Gastrocnemius medialis (tissue), 4 donors: ENCODE measurements at regions of chr5 and their contacts with region 1.

Region 1: GRCh38 chr5:175444060-175444904 is at the start of gene DRD1:
- DNase-seq: no peak
- ATAC-seq: peak in 1 of 2 donors; percentile 54
- H3K4me3 ChIP-seq: peak within 1 kb of the TSS; percentile 23 to 42 (median 34)
- H3K27ac ChIP-seq: no peak within 1 kb of the TSS
- H3K4me1 ChIP-seq: peaks cover 0 to 4% of the 10 kb centered on the region in 2 donors
- H3K27me3 ChIP-seq: peaks cover 36 to 44% (median 40%) of the 10 kb centered on the region in 3 donors
- CTCF ChIP-seq: peak in 4 of 5 experiments; percentile 32 to 60 (median 48)
- POLR2A ChIP-seq: no peak
- total RNA-seq, gene DRD1: not detected

Region 2: GRCh38 chr5:173781814-173782670 is 1662.2 kb before region 1 on chr5:
- in situ Hi-C with region 1: no loop called
- intact Hi-C with region 1: no loop called
- DNase-seq: peak; percentile 75 to 90
- ATAC-seq: peak; percentile 93 to 95
- H3K4me3 ChIP-seq: no peak overlapping the region
- H3K27ac ChIP-seq: peak overlapping the region; percentile 76 to 82 (median 80)
- H3K4me1 ChIP-seq: peaks cover 9 to 26% of the 10 kb centered on the region in 2 donors
- H3K27me3 ChIP-seq: no peaks in the 10 kb centered on the region
- CTCF ChIP-seq: no peak
- POLR2A ChIP-seq: peak; percentile 15 to 40

Region 3: DNA sequence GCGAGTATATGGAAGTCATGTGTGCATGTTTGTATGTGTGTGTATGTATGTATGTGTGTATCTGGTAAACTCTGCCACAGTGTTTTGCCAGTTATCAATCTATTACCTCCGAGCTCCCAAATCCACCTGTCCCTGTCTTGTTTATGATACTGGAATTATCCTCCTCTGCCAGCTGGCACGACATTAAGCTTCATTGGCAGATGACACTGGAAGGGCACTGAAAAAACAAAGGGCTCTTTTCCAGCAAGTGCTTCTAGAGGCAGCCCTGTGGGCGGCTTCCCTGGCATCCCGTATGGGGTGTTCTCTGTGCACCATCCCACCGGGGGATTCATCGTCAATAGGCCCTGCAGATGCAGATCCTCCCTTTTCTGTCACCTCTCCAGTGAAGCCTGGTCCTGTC is 498.4 kb before region 1 on chr5:
- in situ Hi-C with region 1: loop called (anchors 5 to 25 kb)
- intact Hi-C with region 1: loop called (anchors 1 kb)
- DNase-seq: no peak
- ATAC-seq: no peak
- H3K4me3 ChIP-seq: no peak overlapping the region
- H3K27ac ChIP-seq: no peak overlapping the region
- H3K4me1 ChIP-seq: no peaks in the 10 kb centered on the region
- H3K27me3 ChIP-seq: peaks cover 0 to 6% (median 0%) of the 10 kb centered on the region in 3 donors
- CTCF ChIP-seq: no peak
- POLR2A ChIP-seq: no peak

Region 4: DNA sequence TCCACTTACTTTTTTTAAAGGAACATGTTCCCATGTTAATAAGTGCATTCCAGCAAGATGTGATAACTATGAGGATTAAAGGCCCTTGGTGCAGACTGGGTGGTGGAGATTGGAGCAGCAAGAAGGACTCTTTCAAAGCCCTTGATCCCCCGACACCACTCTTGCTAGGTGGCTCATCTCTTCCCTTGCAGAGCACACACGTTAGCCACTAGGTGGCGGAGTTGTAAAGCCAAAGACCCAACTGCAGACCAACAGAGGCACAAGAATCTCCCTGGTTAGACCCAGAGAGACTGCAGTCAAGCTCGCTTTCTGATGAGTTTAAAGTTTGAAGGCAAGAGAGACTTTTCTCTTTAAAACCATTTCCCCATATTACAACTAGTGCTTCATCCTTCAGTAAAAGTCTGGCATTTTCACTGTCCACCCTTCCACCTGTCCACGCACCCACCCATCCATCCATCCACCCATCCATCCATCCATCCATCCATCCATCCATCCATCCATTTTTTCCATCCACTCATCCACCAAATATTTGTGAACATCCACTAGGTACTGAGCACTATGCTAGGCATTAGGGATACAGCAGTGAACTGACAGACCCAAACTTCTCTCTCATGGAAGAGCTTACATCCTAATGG is 493.0 kb before region 1 on chr5:
- in situ Hi-C with region 1: loop called (anchors 5 to 25 kb)
- intact Hi-C with region 1: loop called (anchors 1 kb)
- DNase-seq: peak in 1 of 2 donors; percentile 6
- ATAC-seq: peak; percentile 60 to 70
- H3K4me3 ChIP-seq: no peak overlapping the region
- H3K27ac ChIP-seq: no peak overlapping the region
- H3K4me1 ChIP-seq: no peaks in the 10 kb centered on the region
- H3K27me3 ChIP-seq: peaks cover 0 to 3% (median 0%) of the 10 kb centered on the region in 3 donors
- CTCF ChIP-seq: peak; percentile 28 to 72 (median 58)
- POLR2A ChIP-seq: no peak

Region 5: DNA sequence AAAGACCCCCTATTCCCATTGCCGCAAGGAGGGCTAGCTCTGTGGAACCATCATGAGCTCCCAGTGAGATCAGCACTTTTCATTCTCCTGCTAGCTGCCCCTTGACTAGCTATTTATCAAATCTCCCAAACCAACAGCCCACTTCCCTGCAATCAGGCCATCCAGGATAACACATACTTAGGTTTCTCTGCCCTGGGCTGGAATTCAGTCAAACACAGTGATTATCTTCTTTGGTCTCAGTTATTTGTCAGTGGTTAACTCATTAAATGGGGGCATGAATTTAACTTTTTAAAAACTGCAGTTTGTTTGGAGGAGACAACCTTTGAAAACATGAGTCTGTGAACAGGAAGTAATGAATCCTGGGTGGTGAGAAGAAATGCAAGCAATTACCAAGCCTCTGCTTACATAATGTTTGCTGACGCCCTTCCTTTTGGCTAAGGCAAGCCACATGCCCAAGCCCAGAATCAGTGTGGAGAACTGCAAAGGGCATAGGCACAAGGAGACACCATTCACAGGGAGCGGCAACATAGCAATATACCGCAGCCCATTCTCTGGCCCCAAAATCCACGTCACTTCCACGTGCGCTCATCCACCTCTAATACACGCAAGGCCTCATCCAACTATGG is 275.3 kb before region 1 on chr5:
- in situ Hi-C with region 1: no loop called
- intact Hi-C with region 1: no loop called
- DNase-seq: no peak
- ATAC-seq: no peak
- H3K4me3 ChIP-seq: no peak overlapping the region
- H3K27ac ChIP-seq: no peak overlapping the region
- H3K4me1 ChIP-seq: no peaks in the 10 kb centered on the region
- H3K27me3 ChIP-seq: no peaks in the 10 kb centered on the region
- CTCF ChIP-seq: no peak
- POLR2A ChIP-seq: no peak

Region 6: GRCh38 chr5:175556777-175557176 is 112.5 kb after region 1 on chr5:
- in situ Hi-C with region 1: no loop called
- intact Hi-C with region 1: no loop called
- DNase-seq: no peak
- ATAC-seq: no peak
- H3K4me3 ChIP-seq: no peak overlapping the region
- H3K27ac ChIP-seq: no peak overlapping the region
- H3K4me1 ChIP-seq: no peaks in the 10 kb centered on the region
- H3K27me3 ChIP-seq: peaks cover 0 to 4% (median 0%) of the 10 kb centered on the region in 3 donors
- CTCF ChIP-seq: no peak
- POLR2A ChIP-seq: no peak

Region 7: DNA sequence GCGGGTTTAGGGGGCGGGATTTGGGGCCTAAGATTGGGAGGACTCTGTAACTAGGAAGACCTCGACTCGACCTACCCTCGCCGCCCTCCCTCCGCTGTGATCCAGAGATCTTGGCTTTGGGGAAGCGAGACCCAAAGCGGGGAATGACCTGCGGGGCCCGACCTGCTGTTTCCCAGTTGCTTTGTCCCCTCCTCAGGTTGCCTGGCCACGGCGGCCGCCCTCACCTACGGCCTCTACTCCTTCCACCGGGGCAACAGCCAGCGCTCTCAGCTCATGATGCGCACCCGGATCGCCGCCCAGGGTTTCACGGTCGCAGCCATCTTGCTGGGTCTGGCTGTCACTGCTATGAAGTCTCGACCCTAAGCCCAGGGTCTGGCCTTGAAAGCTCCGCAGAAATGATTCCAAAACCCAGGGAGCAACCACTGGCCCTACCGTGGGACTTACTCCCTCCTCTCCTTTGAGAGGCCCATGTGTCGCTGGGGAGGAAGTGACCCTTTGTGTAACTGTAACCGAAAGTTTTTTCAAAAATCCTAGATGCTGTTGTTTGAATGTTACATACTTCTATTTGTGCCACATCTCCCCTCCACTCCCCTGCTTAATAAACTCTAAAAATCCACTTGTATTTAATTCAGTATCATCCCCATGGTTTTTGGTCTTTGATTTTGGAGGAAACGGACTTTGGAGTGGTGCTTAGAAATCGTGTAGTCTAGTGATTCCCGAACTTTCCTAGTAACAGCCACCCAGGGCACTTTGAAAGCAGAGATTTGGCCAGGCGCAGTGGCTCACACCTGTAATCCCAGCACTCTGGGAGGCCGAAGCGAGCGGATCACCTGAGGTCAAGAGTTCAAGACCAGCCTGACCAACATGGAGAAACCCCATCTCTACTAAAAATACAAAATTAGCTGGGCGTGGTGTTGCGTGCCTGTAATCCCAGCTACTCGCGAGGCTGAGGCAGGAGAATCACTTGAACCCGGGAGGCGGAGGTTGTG is 945.1 kb after region 1 on chr5:
- in situ Hi-C with region 1: no loop called
- intact Hi-C with region 1: no loop called
- DNase-seq: no peak
- ATAC-seq: peak; percentile 19 to 32
- H3K4me3 ChIP-seq: peak overlapping the region; percentile 76 to 95 (median 86)
- H3K27ac ChIP-seq: peak overlapping the region; percentile 92 to 98 (median 96)
- H3K4me1 ChIP-seq: peaks cover 30 to 31% of the 10 kb centered on the region in 2 donors
- H3K27me3 ChIP-seq: no peaks in the 10 kb centered on the region
- CTCF ChIP-seq: peak in 1 of 5 experiments; percentile 2
- POLR2A ChIP-seq: peak; percentile 54 to 67